ENCODE measurements at regions of chr10 and their contacts with region 1.

Region 1: DNA sequence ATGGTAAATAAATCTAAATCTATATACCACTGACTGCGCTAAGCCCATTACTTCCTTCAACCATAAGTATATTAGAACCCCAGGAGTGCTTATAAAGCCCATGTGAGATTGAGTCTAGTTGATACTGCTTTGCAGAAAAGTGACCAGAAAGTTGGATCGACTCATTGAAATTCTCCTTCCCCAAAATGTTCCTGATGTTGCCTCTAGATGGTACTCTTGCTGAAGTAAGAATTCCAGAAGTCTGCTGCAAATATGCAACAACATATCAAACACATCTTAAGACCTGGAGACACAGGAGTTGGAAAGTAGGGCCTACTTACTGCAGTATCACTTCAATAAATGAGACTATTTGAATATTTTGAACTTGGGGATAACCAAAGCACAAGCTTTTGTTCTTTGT is 550.8 kb downstream of the IPMK start:
- DNase-seq: peak; percentile 45
- H3K4me3 ChIP-seq: no peak overlapping the region
- H3K27ac ChIP-seq: no peak overlapping the region
- H3K4me1 ChIP-seq: no peaks in the 10 kb centered on the region
- H3K27me3 ChIP-seq: no peaks in the 10 kb centered on the region
- CTCF ChIP-seq: peak; percentile 56 to 75

Region 2: DNA sequence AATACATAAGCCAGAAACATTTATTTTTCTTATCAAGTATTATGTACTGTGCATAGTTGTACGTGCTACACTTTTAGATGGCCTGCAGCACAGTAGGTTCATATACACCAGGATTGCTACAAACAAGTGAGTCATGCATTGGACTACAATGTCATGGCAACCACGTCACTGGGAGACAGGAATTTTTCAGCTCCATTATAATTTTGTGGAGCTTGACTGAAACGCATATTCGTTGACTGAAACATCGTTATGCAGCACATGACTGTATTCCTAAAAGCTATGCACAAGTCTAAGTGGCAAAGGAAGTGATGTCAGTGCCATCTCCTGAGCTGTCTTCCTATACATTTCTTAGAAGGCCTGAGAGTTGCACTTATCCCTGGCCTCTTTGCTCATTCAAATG is 321.0 kb before region 1 on chr10:
- CTCF ChIA-PET with region 1: no interaction called
- dilution Hi-C with region 1: no loop called
- in situ Hi-C with region 1: no loop called
- intact Hi-C with region 1: no loop called
- DNase-seq: no peak
- H3K4me3 ChIP-seq: no peak overlapping the region
- H3K27ac ChIP-seq: no peak overlapping the region
- H3K4me1 ChIP-seq: no peaks in the 10 kb centered on the region
- H3K27me3 ChIP-seq: peaks cover 2% of the 10 kb centered on the region
- CTCF ChIP-seq: no peak

Region 3: GRCh38 chr10:57513637-57514036 is 203.2 kb before region 1 on chr10:
- CTCF ChIA-PET with region 1: no interaction called
- dilution Hi-C with region 1: no loop called
- in situ Hi-C with region 1: no loop called
- intact Hi-C with region 1: no loop called
- DNase-seq: no peak
- H3K4me3 ChIP-seq: no peak overlapping the region
- H3K27ac ChIP-seq: no peak overlapping the region
- H3K4me1 ChIP-seq: no peaks in the 10 kb centered on the region
- H3K27me3 ChIP-seq: no peaks in the 10 kb centered on the region
- CTCF ChIP-seq: no peak

Region 4: DNA sequence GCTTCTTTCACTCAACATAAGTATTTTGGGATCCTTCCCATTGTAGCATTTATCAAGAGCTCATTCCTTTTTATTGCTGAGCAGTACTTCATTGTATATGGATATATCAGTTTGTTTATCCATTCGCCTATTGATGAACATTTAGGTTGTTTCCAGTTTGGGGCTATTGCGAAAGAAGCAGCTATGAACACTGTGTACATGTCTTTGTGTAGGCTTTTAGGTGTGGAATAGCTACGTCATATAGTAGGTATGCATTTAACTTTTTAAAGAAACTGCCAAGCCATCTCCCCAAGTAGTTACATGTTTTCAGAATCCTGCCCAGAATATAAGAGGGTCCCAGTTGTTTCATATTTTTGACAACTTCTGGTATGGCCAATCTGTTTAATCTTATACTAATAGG is 82.7 kb after region 1 on chr10:
- CTCF ChIA-PET with region 1: no interaction called
- dilution Hi-C with region 1: no loop called
- in situ Hi-C with region 1: no loop called
- intact Hi-C with region 1: no loop called
- DNase-seq: peak; percentile 83
- H3K4me3 ChIP-seq: no peak overlapping the region
- H3K27ac ChIP-seq: peak overlapping the region; percentile 91
- H3K4me1 ChIP-seq: peaks cover 8% of the 10 kb centered on the region
- H3K27me3 ChIP-seq: no peaks in the 10 kb centered on the region
- CTCF ChIP-seq: no peak

Region 5: DNA sequence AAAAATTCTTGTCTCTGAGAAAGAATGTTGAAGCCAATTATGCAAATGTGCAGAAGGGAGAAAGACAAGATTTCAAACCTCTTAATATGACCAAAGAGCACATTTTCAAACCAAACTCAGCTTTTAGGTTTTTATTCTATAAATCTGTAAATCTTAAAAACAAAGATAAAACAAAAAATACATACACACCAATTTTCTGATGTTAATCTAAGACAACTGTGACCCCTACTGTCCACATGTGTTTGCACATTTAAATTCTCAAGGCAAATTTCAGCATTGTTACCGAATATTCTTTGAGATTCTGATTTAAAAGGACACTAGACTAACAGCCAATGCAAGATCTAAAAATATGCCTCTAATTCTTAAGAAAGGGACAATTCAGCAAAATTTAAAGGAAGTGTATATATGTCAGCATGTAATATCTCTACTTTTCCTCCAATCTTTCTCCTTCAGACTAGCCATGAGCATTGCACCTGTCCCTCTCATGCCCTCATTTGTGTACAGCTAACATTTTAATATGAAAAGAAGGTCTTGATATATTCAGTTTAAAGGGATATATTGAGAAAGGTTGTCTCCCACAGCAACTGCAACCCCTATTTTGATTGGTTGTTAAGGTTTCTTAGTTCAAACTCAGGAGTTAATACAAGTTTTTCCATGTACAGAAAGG is 132.9 kb after region 1 on chr10:
- CTCF ChIA-PET with region 1: interaction called, 3 read pairs
- dilution Hi-C with region 1: no loop called
- in situ Hi-C with region 1: loop called (anchors 5 to 10 kb)
- intact Hi-C with region 1: loop called (anchors 1 kb)
- DNase-seq: peak; percentile 13
- H3K4me3 ChIP-seq: no peak overlapping the region
- H3K27ac ChIP-seq: no peak overlapping the region
- H3K4me1 ChIP-seq: no peaks in the 10 kb centered on the region
- H3K27me3 ChIP-seq: no peaks in the 10 kb centered on the region
- CTCF ChIP-seq: peak; percentile 50 to 53